ENCODE measurements at regions of chr17 and their contacts with region 1.

Region 1: DNA sequence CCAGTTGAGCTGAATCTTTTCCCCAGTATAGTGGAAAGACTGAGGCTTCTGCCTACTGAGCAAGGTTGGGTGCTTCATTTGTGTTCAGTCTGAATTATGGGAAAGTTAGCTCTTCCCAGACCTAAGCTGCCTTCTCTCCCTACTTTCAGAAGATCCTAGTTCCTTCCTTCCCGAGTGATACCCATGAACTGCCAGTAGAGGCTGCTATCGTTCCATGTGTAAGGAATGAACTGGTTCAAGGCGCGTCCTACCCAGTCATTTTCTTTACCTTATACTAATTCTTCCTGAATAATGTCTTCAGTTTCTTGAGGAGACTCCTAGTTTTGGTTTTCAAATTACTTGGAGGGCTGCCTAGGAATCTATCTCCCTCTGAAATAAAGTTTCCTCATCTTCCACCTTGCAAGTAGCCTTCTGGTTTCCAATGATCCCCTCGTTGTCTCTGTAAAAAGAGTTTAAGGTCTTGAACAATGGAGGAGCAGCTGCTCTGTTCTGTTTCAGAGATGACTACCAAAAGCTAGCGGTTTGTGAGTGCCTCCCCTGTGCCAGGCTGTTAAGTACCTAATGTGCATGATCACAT is 934 bp upstream of the AOC2 start:
- DNase-seq: peak; percentile 51
- ATAC-seq: peak; percentile 76
- H3K4me3 ChIP-seq: no peak overlapping the region
- H3K27ac ChIP-seq: no peak overlapping the region
- H3K4me1 ChIP-seq: no peaks in the 10 kb centered on the region
- H3K27me3 ChIP-seq: no peaks in the 10 kb centered on the region
- CTCF ChIP-seq: peak; percentile 76 to 97 (median 88)
- POLR2A ChIP-seq: no peak
- RAD21 ChIP-seq: peak; percentile 90

Region 2: DNA sequence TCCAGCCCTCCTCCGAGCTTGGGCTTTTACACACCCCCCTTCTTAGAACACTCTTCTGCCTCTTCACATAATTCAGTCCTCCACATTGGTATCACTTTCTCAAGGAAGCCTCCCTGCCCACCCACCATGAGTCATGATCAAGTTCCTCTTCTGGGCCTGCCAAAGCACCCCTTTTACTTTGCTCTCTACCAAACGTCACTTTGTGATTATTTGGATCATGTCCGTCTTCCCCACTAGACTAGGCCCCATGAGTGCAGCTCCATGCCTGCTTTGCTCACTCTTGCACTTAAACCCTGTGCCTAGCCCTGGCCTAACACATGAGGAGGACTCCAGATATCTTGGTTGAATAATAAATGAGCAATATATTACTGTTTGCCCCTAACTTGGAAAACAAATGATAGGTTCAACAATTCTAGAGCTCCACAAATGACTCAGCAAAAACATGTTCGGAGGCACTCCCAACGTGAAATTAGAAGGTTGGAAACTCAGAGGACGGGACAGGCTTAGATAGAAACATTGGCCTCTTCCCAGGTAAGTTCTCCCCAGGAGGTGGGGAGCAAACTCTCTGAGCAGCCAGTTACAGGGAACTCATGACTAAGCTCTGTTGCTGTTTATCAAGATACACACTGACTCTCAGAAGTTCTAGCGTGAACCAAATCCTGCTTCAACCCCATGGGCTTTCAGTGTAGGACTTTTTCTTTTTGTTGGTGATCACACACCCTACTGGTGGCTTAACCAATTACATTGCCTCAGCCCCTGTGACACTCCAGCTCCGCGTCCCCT is 85.5 kb after region 1 on chr17:
- CTCF ChIA-PET with region 1: interaction called, 15 read pairs
- POLR2A ChIA-PET with region 1: no interaction called
- RAD21 ChIA-PET with region 1: interaction called in 1 of 2 experiments, 3 read pairs
- intact Hi-C with region 1: loop called (anchors 2 kb)
- DNase-seq: peak; percentile 60
- ATAC-seq: peak; percentile 97
- H3K4me3 ChIP-seq: no peak overlapping the region
- H3K27ac ChIP-seq: no peak overlapping the region; the same call in 1 of the 2 replicates
- H3K4me1 ChIP-seq: peaks cover 0 to 10% of the 10 kb centered on the region in 2 experiments; a peak in 2 of 4 replicates
- H3K27me3 ChIP-seq: no peaks in the 10 kb centered on the region
- CTCF ChIP-seq: peak; percentile 43 to 57 (median 50); a peak in 5 of 6 replicates
- POLR2A ChIP-seq: no peak
- RAD21 ChIP-seq: peak; percentile 72

Region 3: DNA sequence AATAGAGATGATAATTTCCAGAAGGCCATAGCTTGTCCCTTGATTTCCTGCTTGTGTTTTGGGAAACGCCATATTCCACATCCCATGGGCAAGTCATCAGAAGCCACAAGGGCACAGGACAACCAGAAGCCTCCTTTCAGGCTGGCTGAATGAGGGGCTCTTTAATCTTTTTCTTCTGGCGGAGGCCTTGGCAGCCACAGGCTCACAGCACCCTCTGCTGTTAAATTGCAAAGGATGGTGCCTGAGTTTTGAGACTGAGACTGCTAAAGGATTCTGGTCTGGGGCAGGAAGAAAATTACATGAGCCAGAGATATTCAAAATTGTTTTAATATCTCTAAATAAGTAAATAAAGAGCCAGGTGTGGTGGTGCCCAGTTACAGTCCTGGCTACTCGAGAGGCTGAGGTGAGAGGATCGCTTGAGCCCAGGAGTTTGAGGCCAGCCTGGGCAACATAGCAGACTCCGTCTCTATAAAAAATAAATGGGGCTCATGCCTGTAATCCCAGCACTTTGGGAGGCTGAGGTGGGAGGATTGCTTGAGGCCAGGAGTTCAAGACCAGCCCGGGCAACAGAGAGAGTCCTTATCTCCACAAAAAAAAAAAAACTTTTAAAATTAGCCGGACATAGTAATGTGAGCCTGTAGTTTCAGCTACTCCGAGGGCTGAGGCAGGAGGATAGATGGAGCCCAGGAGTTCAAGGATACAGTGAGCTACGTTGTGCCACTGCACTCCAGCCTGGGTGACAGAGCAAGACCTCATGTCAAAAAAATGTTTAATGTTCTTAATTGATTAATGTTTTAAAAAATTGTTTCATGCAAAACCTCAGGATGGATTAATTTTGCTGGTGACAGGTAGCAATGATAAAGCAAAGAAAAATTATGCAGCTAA is 94.5 kb after region 1 on chr17:
- CTCF ChIA-PET with region 1: interaction called, 5 read pairs
- POLR2A ChIA-PET with region 1: no interaction called
- RAD21 ChIA-PET with region 1: interaction called, 3 to 5 read pairs
- intact Hi-C with region 1: loop called (anchors 1 kb)
- DNase-seq: peak; percentile 51
- ATAC-seq: peak; percentile 89
- H3K4me3 ChIP-seq: no peak overlapping the region
- H3K27ac ChIP-seq: no peak overlapping the region
- H3K4me1 ChIP-seq: no peaks in the 10 kb centered on the region; a peak in 1 of 4 replicates
- H3K27me3 ChIP-seq: no peaks in the 10 kb centered on the region; the same call in 1 of the 2 replicates
- CTCF ChIP-seq: peak; percentile 69 to 87 (median 76)
- POLR2A ChIP-seq: no peak
- RAD21 ChIP-seq: peak; percentile 93

Region 4: DNA sequence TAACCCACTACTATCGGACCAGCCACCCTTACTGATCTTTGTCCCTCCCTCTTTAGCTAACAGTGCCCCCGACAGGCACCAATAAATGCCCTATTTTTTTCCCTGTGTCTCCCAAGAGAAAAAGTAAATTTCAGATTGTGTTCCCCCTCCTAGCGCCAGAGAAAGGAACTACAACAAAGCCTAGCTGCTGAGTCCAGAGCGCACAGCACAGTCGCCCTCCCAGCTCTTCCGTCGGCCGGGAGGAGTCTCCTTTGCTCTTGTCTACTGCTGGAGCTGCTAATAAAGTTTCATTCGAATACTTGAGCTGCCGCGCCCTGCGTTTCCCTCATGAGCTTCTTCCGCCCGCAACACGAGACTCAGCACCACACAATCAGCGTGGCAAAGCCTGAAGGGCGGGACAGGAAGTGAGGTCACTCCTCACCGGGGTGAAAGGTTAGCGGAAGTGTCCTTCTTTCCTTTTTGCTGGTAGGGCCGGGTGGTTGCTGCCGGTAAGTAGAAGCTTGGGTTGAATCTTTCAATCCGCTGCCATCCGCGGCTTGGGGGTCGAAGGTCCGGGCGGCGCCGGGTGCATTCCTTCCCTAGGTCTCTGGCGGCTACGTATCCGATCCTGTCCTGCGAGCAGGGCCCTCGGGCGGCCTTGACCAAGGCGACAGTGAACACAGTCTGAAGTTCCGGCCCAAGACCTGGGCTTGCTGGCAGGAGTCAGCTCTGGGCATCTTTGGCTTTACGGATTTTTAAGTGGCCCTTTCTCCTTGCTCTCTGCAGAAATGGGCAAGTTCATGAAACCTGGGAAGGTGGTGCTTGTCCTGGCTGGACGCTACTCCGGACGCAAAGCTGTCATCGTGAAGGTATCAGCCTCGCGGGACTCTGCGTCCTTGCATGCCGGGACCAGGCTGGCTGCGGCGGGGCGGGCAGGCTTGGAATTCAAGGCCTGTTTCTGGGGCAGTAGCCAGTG is 154.8 kb after region 1 on chr17 and contains the start of gene RPL27:
- CTCF ChIA-PET with region 1: interaction called, 3 read pairs
- POLR2A ChIA-PET with region 1: interaction called, 6 read pairs
- RAD21 ChIA-PET with region 1: no interaction called
- intact Hi-C with region 1: loop called (anchors 1 kb)
- DNase-seq: peak; percentile 100
- ATAC-seq: peak; percentile 90
- H3K4me3 ChIP-seq: peak within 1 kb of the TSS; percentile 97 to 99
- H3K27ac ChIP-seq: peak within 1 kb of the TSS; percentile 92
- H3K4me1 ChIP-seq: peaks cover 13 to 48% of the 10 kb centered on the region in 2 experiments
- H3K27me3 ChIP-seq: no peaks in the 10 kb centered on the region
- CTCF ChIP-seq: peak; percentile 77 to 96 (median 79)
- POLR2A ChIP-seq: peak; percentile 78
- RAD21 ChIP-seq: peak; percentile 84
- total RNA-seq, gene RPL27: 1,295 TPM